ENCODE measurements at regions of chr9 and their contacts with region 1.

Region 1: DNA sequence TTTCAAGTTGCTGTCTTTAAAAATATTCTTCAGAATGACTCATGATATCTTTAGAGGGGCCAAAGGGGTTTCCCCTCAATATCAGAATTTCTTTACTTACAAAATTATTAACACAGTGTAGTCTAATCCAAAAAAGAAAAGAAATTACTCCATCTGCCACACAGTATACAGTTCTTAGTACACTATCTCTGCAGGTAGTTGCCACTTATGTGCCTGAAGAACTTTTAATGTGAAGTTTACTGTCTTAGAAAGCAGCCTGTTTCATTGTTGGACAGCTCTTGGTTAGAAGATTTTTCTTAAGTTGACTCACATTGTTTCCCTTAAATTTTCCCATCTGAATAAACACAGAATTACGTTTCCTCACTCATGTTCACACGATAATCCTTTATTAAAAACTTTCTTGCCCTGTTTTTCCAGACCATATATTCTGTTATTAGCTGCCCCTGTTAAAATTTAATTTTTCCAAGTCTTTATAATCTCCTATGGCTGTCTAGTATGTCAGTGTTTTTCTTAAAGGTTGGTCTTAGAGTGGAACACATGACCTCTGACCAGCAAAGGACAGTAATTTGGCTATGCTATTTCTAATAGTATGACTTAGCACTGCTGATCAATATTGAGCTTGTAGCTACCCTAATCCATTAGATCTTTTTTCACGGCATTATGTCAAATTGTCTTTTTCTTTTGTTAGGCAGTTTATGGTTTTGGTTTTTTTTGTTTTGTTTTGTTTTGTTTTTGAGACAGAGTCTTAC is 21.8 kb upstream of the FKTN start:
- DNase-seq: no peak
- ATAC-seq: peak; percentile 84
- H3K4me3 ChIP-seq: no peak overlapping the region
- H3K27ac ChIP-seq: peak overlapping the region; percentile 49
- H3K4me1 ChIP-seq: peaks cover 8% of the 10 kb centered on the region
- H3K27me3 ChIP-seq: no peaks in the 10 kb centered on the region
- CTCF ChIP-seq: no peak
- EP300 ChIP-seq: no peak
- POLR2A ChIP-seq: no peak
- RAD21 ChIP-seq: no peak

Region 2: DNA sequence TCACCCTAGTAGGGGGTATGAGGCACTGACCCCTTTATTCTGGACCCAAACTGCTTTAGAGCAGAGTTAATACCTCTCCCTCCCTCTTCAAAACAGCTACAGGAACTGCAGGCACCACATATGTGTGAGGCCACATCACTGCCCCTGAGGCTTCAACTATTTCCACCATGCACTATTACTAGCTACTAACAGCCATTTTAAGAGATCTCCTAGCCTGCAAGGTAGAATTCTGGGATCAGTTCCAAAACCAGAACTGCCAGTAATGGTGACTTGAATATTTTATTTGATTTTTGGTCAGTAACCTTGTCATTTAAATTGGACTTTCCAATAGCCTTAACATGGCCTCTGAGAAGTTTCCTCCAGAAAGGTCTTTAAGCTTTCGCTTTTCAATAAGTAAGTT is 143.6 kb before region 1 on chr9:
- CTCF ChIA-PET with region 1: no interaction called
- POLR2A ChIA-PET with region 1: no interaction called
- RAD21 ChIA-PET with region 1: no interaction called
- SMC1A ChIA-PET with region 1: no interaction called
- in situ Hi-C with region 1: no loop called
- intact Hi-C with region 1: no loop called
- DNase-seq: no peak
- ATAC-seq: no peak
- H3K4me3 ChIP-seq: no peak overlapping the region
- H3K27ac ChIP-seq: no peak overlapping the region
- H3K4me1 ChIP-seq: no peaks in the 10 kb centered on the region
- H3K27me3 ChIP-seq: no peaks in the 10 kb centered on the region
- CTCF ChIP-seq: no peak
- EP300 ChIP-seq: no peak
- POLR2A ChIP-seq: no peak
- RAD21 ChIP-seq: no peak

Region 3: DNA sequence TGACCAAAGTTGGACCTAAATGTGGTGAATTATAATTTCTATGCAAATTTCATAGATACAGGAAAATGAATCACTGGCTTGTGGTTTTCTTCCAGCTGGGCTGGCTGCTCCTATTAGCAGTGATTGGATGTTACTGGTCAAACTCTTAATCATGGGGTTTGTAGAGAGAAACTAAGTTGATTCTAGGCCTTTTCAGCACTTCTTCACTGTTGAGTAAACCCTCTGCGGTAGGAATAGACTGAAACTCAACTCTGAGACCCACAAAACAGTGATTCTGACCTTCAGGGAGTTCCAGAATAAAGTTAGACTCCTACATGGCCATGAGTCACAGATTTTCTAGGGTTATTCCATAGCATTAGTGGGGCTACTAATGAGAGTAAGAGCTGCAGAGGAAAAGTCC is 26.1 kb before region 1 on chr9:
- CTCF ChIA-PET with region 1: interaction called, 15 read pairs
- POLR2A ChIA-PET with region 1: interaction called, 4 read pairs
- RAD21 ChIA-PET with region 1: interaction called, 20 read pairs
- SMC1A ChIA-PET with region 1: interaction called, 29 read pairs
- in situ Hi-C with region 1: no loop called
- intact Hi-C with region 1: no loop called
- DNase-seq: peak; percentile 54
- ATAC-seq: peak; percentile 78
- H3K4me3 ChIP-seq: no peak overlapping the region
- H3K27ac ChIP-seq: peak overlapping the region; percentile 30
- H3K4me1 ChIP-seq: no peaks in the 10 kb centered on the region; the same call in none of the 2 replicates
- H3K27me3 ChIP-seq: no peaks in the 10 kb centered on the region
- CTCF ChIP-seq: no peak
- EP300 ChIP-seq: peak in 1 of 2 experiments; percentile 12; a peak in 1 of 4 replicates
- POLR2A ChIP-seq: no peak
- RAD21 ChIP-seq: no peak

Region 4: GRCh38 chr9:105549375-105549774 is 13.3 kb after region 1 on chr9:
- CTCF ChIA-PET with region 1: interaction called, 3 read pairs
- POLR2A ChIA-PET with region 1: no interaction called
- RAD21 ChIA-PET with region 1: interaction called, 6 read pairs
- SMC1A ChIA-PET with region 1: interaction called, 11 read pairs
- in situ Hi-C with region 1: no loop called
- intact Hi-C with region 1: no loop called
- DNase-seq: no peak
- ATAC-seq: no peak
- H3K4me3 ChIP-seq: no peak overlapping the region
- H3K27ac ChIP-seq: no peak overlapping the region
- H3K4me1 ChIP-seq: no peaks in the 10 kb centered on the region
- H3K27me3 ChIP-seq: no peaks in the 10 kb centered on the region
- CTCF ChIP-seq: no peak
- EP300 ChIP-seq: no peak
- POLR2A ChIP-seq: no peak
- RAD21 ChIP-seq: no peak

Measured in GM12878 (cell line).